A673 (cell line): ENCODE measurements at regions of chr6 and their contacts with region 1.

Region 1: GRCh38 chr6:100479179-100480035 is 14.7 kb upstream of the SIM1 start:
- DNase-seq: peak; percentile 49
- H3K4me3 ChIP-seq: no peak overlapping the region
- H3K27ac ChIP-seq: no peak overlapping the region
- H3K4me1 ChIP-seq: no peaks in the 10 kb centered on the region
- H3K27me3 ChIP-seq: no peaks in the 10 kb centered on the region
- CTCF ChIP-seq: peak; percentile 79

Region 2: GRCh38 chr6:100176311-100176950 is 303.0 kb before region 1 on chr6:
- CTCF ChIA-PET with region 1: no interaction called
- POLR2A ChIA-PET with region 1: no interaction called
- intact Hi-C with region 1: loop called (anchors 2 kb)
- DNase-seq: peak; percentile 34
- H3K4me3 ChIP-seq: no peak overlapping the region
- H3K27ac ChIP-seq: no peak overlapping the region
- H3K4me1 ChIP-seq: no peaks in the 10 kb centered on the region
- H3K27me3 ChIP-seq: no peaks in the 10 kb centered on the region
- CTCF ChIP-seq: peak; percentile 60

Region 3: GRCh38 chr6:100657678-100658330 is 178.4 kb after region 1 on chr6:
- CTCF ChIA-PET with region 1: no interaction called
- POLR2A ChIA-PET with region 1: no interaction called
- intact Hi-C with region 1: loop called (anchors 5 kb)
- DNase-seq: peak; percentile 44
- H3K4me3 ChIP-seq: no peak overlapping the region
- H3K27ac ChIP-seq: no peak overlapping the region
- H3K4me1 ChIP-seq: no peaks in the 10 kb centered on the region
- H3K27me3 ChIP-seq: no peaks in the 10 kb centered on the region
- CTCF ChIP-seq: peak; percentile 76

Region 4: DNA sequence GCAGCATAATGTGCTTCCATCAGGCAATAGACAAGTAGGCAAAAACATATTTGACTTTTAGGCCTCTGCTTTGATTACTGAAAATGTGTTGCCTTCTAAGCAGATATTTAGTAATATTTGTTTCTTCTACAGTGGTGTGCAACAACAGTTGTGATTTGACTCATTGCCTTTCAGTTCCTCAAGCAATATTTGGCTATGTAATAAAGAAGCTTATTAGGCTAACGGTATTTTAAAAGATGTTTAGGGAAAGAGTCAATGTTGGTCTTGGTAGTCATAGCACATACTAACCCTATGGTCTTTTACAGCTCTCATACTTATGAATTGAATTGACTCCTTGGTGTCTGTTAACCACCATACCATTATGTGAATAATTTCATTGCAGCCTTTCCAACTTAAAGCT is 1038.2 kb after region 1 on chr6:
- CTCF ChIA-PET with region 1: no interaction called
- POLR2A ChIA-PET with region 1: no interaction called
- intact Hi-C with region 1: no loop called
- DNase-seq: no peak
- H3K4me3 ChIP-seq: no peak overlapping the region
- H3K27ac ChIP-seq: no peak overlapping the region
- H3K4me1 ChIP-seq: peaks cover 14% of the 10 kb centered on the region
- H3K27me3 ChIP-seq: no peaks in the 10 kb centered on the region
- CTCF ChIP-seq: no peak